IMR-90 (cell line): ENCODE measurements at regions of chr19 and their contacts with region 1.

Region 1: GRCh38 chr19:18571564-18572300 is at the start of gene UBA52:
- DNase-seq: peak; percentile 96
- ATAC-seq: peak; percentile 97
- H3K4me3 ChIP-seq: peak within 1 kb of the TSS; percentile 85
- H3K27ac ChIP-seq: peak within 1 kb of the TSS; percentile 65
- H3K4me1 ChIP-seq: peaks cover 10% of the 10 kb centered on the region
- H3K27me3 ChIP-seq: no peaks in the 10 kb centered on the region
- CTCF ChIP-seq: no peak
- POLR2A ChIP-seq: peak; percentile 96
- RAD21 ChIP-seq: no peak
- total RNA-seq, gene UBA52: 1,030 and 1,144 TPM in 2 replicates

Region 2: DNA sequence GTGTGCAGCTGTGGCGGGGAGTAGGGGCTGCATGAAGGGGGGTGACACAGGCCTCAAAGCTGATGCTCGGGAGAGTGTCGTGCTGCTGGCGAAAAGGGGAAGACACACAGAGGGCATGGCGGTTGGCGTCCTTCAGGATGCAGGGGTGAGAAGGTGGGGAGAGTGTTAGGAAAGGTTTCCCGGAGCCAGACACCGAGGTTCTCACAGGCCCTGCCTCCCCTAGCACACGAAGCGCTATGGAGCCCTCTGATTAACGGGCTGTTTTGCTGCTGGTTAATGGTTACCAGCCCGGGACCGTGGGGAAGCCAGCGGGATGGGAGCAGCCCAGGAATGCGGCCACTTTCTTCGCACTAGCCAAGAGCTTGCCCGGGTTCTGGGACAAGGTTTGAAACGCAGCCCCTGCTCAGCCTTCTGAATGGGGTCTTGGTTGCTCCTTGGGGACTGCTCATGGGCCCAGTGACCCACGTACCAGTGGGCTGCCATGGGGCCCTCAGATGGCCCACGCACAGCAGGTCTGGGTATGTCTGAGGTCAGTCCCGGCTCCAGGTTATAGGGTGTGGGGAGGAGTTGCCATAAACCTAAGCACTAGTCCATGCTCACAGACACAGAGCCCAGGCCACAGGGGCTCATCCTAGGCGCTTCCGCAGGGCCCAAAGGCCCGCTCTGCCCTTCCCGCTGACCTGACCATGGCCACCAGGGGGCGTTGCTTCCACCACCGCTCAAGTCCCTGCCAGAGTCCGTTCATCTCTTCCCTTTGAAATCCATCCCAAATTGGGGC is 102.5 kb before region 1 on chr19:
- CTCF ChIA-PET with region 1: no interaction called
- POLR2A ChIA-PET with region 1: no interaction called
- dilution Hi-C with region 1: no loop called
- in situ Hi-C with region 1: no loop called
- intact Hi-C with region 1: loop called (anchors 5 kb)
- DNase-seq: peak; percentile 66
- ATAC-seq: peak; percentile 25; the same call in 1 of the 2 replicates
- H3K4me3 ChIP-seq: no peak overlapping the region
- H3K27ac ChIP-seq: no peak overlapping the region
- H3K4me1 ChIP-seq: peaks cover 32% of the 10 kb centered on the region
- H3K27me3 ChIP-seq: no peaks in the 10 kb centered on the region
- CTCF ChIP-seq: peak; percentile 72
- POLR2A ChIP-seq: no peak
- RAD21 ChIP-seq: peak; percentile 71

Region 3: DNA sequence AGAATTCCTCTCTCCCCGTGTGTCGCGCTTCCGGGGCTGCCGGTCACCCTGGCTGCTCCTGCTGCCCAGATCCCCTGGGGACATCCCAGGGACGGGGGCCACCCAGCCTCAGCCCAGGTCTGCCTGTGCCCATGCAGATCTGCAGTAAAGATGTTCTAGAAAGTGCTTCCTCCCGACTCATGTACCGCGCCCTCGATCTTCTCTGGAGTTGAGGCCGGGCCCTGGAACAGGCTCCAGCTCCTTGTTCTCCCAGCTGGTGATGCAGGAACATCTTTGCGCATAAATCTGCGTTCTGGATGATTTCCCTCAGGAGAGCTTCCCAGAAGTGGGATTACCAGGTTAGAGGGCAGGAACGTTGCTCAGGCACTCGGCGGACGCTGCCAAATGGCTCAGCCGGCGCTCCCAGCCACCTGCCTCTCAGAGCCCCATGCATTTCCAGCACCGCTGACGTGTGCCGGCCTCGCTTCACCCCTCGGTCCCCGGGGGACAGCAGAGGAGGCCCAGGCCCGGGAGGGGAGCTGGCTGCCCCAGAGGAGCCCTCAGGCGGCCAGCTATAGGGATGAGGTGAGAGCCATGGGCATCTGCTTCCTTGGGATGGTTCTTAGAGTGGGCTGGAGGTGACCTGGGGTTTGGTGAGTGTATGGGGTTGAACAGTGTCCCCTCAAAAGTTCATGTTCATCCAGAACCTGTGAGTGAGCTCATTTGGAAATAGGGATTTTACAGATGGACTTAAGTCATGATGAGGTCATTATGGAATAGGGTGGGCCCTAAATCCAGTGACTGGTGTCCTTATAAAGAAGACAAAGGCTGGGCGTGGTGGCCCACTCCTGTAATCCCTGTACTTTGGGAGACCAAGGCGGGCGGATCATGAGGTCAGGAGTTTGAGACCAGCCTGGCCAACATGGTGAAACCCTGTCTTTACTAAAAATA is 154.4 kb after region 1 on chr19:
- CTCF ChIA-PET with region 1: no interaction called
- POLR2A ChIA-PET with region 1: no interaction called
- dilution Hi-C with region 1: no loop called
- in situ Hi-C with region 1: no loop called
- intact Hi-C with region 1: no loop called
- DNase-seq: no peak
- ATAC-seq: no peak
- H3K4me3 ChIP-seq: no peak overlapping the region
- H3K27ac ChIP-seq: no peak overlapping the region
- H3K4me1 ChIP-seq: no peaks in the 10 kb centered on the region
- H3K27me3 ChIP-seq: no peaks in the 10 kb centered on the region
- CTCF ChIP-seq: no peak
- POLR2A ChIP-seq: no peak
- RAD21 ChIP-seq: no peak

Region 4: GRCh38 chr19:18846862-18847548 is 275.3 kb after region 1 on chr19:
- CTCF ChIA-PET with region 1: no interaction called
- POLR2A ChIA-PET with region 1: no interaction called
- dilution Hi-C with region 1: no loop called
- in situ Hi-C with region 1: no loop called
- intact Hi-C with region 1: loop called (anchors 5 kb)
- DNase-seq: peak; percentile 69
- ATAC-seq: peak; percentile 93
- H3K4me3 ChIP-seq: no peak overlapping the region
- H3K27ac ChIP-seq: no peak overlapping the region
- H3K4me1 ChIP-seq: peaks cover 21% of the 10 kb centered on the region
- H3K27me3 ChIP-seq: no peaks in the 10 kb centered on the region
- CTCF ChIP-seq: peak; percentile 92
- POLR2A ChIP-seq: no peak
- RAD21 ChIP-seq: peak; percentile 96